CD4-positive, alpha-beta T cell (primary cell): ENCODE measurements at regions of chr6 and their contacts with region 1.

Region 1: GRCh38 chr6:35259194-35259947 is at the start of gene ZNF76:
- DNase-seq: peak; percentile 76 to 98 (median 91)
- ATAC-seq: peak; percentile 73
- H3K4me3 ChIP-seq: peak within 1 kb of the TSS; percentile 97
- H3K4me3 Mint-ChIP-seq: peak within 1 kb of the TSS; percentile 98
- H3K27ac ChIP-seq: peak within 1 kb of the TSS; percentile 93 to 97
- H3K27ac Mint-ChIP-seq: peak within 1 kb of the TSS; percentile 98
- H3K4me1 ChIP-seq: peaks cover 31% of the 10 kb centered on the region
- H3K4me1 Mint-ChIP-seq: peaks cover 61% of the 10 kb centered on the region
- H3K27me3 ChIP-seq: no peaks in the 10 kb centered on the region
- H3K27me3 Mint-ChIP-seq: no peaks in the 10 kb centered on the region
- CTCF ChIP-seq: no peak
- total RNA-seq, gene ZNF76: 46.1 to 53.4 TPM

Region 2: DNA sequence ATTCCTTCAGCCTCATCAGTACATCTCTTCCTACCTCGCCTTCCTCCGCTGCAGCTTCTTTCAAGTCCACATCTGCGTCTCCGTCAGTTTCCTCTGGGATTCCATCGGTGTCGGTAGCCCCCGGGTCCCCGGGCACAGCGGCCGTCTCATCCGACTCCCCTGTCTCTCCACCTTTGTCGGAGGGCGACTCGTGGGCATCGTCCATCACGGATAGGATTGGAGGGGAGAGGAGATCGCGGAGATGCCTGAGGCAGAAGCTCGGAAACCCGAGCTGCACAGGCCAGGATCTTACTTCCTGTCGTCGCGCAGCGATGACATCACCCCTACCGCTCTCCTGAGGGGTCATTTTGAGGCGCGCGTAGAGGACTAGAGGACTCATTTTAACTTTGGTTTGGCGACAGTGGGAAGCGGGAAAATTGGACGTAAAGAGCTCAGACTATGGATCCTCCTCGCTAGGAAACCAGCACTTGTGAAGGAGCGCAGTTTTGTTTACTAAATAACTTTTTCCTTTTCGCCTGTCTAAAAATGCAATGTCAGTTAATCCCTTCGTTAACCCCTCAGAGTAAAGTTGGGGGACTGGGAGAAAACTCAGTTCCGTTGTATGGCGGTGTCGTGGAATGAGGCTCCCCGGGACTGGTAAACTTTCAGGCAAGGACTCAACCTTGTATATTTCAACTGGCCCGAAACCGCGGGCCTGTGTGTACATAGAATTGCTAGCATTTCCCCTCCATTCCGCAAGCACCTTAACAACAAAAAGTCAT is 371.4 kb before region 1 on chr6 and contains the start of gene TAF11:
- CTCF ChIA-PET with region 1: no interaction called
- POLR2A ChIA-PET with region 1: interaction called, 10 read pairs
- intact Hi-C with region 1: loop called in 1 of 2 experiments (anchors 10 kb)
- DNase-seq: peak; percentile 78 to 96 (median 87)
- ATAC-seq: peak; percentile 69
- H3K4me3 ChIP-seq: peak within 1 kb of the TSS; percentile 98
- H3K4me3 Mint-ChIP-seq: peak within 1 kb of the TSS; percentile 97
- H3K27ac ChIP-seq: peak within 1 kb of the TSS; percentile 90 to 93
- H3K27ac Mint-ChIP-seq: peak within 1 kb of the TSS; percentile 97
- H3K4me1 ChIP-seq: peaks cover 36% of the 10 kb centered on the region
- H3K4me1 Mint-ChIP-seq: peaks cover 62% of the 10 kb centered on the region
- H3K27me3 ChIP-seq: no peaks in the 10 kb centered on the region
- H3K27me3 Mint-ChIP-seq: no peaks in the 10 kb centered on the region
- CTCF ChIP-seq: no peak
- total RNA-seq, gene TAF11: 31.5 to 38.1 TPM

Region 3: DNA sequence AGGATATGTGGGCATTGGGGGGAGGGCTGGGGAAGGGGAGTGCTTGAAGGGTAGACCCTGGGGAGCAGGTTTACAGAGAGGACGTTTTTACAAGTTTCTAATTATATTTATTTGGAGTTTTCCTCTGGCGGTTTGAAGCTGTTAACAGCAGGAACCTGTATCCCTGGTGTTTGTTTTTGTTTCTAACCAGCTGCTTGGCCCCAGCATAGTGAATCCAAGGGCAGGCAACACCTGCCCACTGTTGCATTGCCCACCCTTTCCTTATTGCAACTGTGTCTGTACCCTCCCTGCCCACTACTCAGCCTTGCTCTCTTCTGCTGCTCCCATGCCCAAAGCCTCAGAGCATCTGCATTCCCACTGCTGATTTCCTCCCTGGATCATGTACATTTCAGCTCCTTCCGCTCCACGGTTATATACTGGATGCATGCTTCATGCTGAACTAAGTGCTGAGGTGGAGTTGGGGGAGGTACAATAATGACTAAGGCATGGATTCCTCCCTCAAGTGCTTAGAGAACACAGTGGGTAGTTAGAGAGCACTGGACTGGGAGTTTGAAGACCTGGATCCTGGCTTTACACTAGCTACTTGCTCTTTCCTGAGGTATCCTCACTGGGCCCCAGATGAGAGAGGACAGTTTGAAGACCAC is 39.6 kb before region 1 on chr6:
- CTCF ChIA-PET with region 1: no interaction called
- POLR2A ChIA-PET with region 1: no interaction called
- intact Hi-C with region 1: no loop called
- DNase-seq: no peak
- ATAC-seq: no peak
- H3K4me3 ChIP-seq: no peak overlapping the region
- H3K4me3 Mint-ChIP-seq: no peak overlapping the region
- H3K27ac ChIP-seq: no peak overlapping the region
- H3K27ac Mint-ChIP-seq: no peak overlapping the region
- H3K4me1 ChIP-seq: no peaks in the 10 kb centered on the region
- H3K4me1 Mint-ChIP-seq: no peaks in the 10 kb centered on the region
- H3K27me3 ChIP-seq: peaks cover 20 to 40% of the 10 kb centered on the region in 2 experiments
- H3K27me3 Mint-ChIP-seq: peaks cover 58% of the 10 kb centered on the region
- CTCF ChIP-seq: no peak

Region 4: GRCh38 chr6:35240840-35241801 is 18.2 kb before region 1 on chr6:
- CTCF ChIA-PET with region 1: interaction called, 12 read pairs
- POLR2A ChIA-PET with region 1: interaction called, 6 read pairs
- intact Hi-C with region 1: no loop called
- DNase-seq: peak; percentile 58 to 81 (median 70)
- ATAC-seq: peak; percentile 93
- H3K4me3 ChIP-seq: no peak overlapping the region
- H3K4me3 Mint-ChIP-seq: no peak overlapping the region
- H3K27ac ChIP-seq: no peak overlapping the region
- H3K27ac Mint-ChIP-seq: no peak overlapping the region
- H3K4me1 ChIP-seq: peaks cover 6% of the 10 kb centered on the region
- H3K4me1 Mint-ChIP-seq: peaks cover 4% of the 10 kb centered on the region
- H3K27me3 ChIP-seq: no peaks in the 10 kb centered on the region
- H3K27me3 Mint-ChIP-seq: no peaks in the 10 kb centered on the region
- CTCF ChIP-seq: peak; percentile 94

Region 5: DNA sequence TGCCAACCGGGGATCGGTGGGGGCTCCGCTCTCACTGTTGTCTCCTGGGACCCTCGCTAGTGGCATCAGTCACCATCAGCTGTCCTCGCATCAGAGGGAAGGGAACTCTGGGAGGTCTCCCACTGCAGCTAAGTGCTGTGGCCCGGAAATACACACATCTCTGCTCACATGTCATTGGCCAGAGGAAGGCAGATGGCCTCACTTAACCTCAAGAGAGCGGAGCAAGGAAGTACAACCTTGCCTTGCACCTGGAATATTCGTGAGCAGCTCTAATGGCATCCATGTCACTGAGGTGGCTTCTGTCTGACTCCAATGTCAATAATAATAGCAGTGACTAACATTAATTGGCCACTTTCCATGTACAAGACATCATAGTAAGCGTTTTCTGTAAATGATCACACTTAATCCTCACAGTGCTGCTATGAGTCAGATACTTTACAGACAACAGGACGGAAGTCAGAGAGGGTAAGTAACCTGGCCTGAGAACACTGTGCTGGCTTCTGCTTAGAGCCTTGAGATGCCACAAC is 551.7 kb after region 1 on chr6:
- CTCF ChIA-PET with region 1: no interaction called
- POLR2A ChIA-PET with region 1: no interaction called
- intact Hi-C with region 1: no loop called
- DNase-seq: no peak
- ATAC-seq: no peak
- H3K4me3 ChIP-seq: no peak overlapping the region
- H3K4me3 Mint-ChIP-seq: no peak overlapping the region
- H3K27ac ChIP-seq: no peak overlapping the region
- H3K27ac Mint-ChIP-seq: no peak overlapping the region
- H3K4me1 ChIP-seq: peaks cover 3% of the 10 kb centered on the region
- H3K4me1 Mint-ChIP-seq: no peaks in the 10 kb centered on the region
- H3K27me3 ChIP-seq: peaks cover 7 to 17% of the 10 kb centered on the region in 2 experiments
- H3K27me3 Mint-ChIP-seq: peaks cover 28% of the 10 kb centered on the region
- CTCF ChIP-seq: no peak

Region 6: GRCh38 chr6:35919827-35920751 is 660.7 kb after region 1 on chr6:
- CTCF ChIA-PET with region 1: no interaction called
- POLR2A ChIA-PET with region 1: no interaction called
- intact Hi-C with region 1: no loop called
- DNase-seq: peak; percentile 7 to 83 (median 38)
- ATAC-seq: peak; percentile 68
- H3K4me3 ChIP-seq: peak overlapping the region; percentile 82
- H3K4me3 Mint-ChIP-seq: peak overlapping the region; percentile 96
- H3K27ac ChIP-seq: peak overlapping the region; percentile 2 to 59
- H3K27ac Mint-ChIP-seq: peak overlapping the region; percentile 80
- H3K4me1 ChIP-seq: peaks cover 11% of the 10 kb centered on the region
- H3K4me1 Mint-ChIP-seq: peaks cover 44% of the 10 kb centered on the region
- H3K27me3 ChIP-seq: no peaks in the 10 kb centered on the region
- H3K27me3 Mint-ChIP-seq: no peaks in the 10 kb centered on the region
- CTCF ChIP-seq: no peak